Activated CD8-positive, alpha-beta T cell treated with anti-CD3 and anti-CD28 coated beads, Interleukin-2, amount 10 ng/mL, durations not matched to agents 7 days and 5 days (primary cell): ENCODE measurements at regions of chr17 and their contacts with region 1.

Region 1: GRCh38 chr17:4143563-4144421 is 795 bp downstream of the CYB5D2 start:
- DNase-seq: peak; percentile 93
- ATAC-seq: peak; percentile 77
- H3K4me3 Mint-ChIP-seq: peak overlapping the region; percentile 96
- H3K27ac Mint-ChIP-seq: peak overlapping the region; percentile 100
- H3K4me1 Mint-ChIP-seq: peaks cover 42% of the 10 kb centered on the region
- H3K27me3 Mint-ChIP-seq: no peaks in the 10 kb centered on the region

Region 2: GRCh38 chr17:4087906-4088693 is 55.7 kb before region 1 on chr17:
- CTCF ChIA-PET with region 1: no interaction called
- POLR2A ChIA-PET with region 1: no interaction called
- DNase-seq: no peak
- ATAC-seq: no peak
- H3K4me3 Mint-ChIP-seq: no peak overlapping the region
- H3K27ac Mint-ChIP-seq: no peak overlapping the region
- H3K4me1 Mint-ChIP-seq: no peaks in the 10 kb centered on the region
- H3K27me3 Mint-ChIP-seq: no peaks in the 10 kb centered on the region

Region 3: GRCh38 chr17:4156750-4157381 is 13.1 kb after region 1 on chr17:
- CTCF ChIA-PET with region 1: interaction called, 4 read pairs
- POLR2A ChIA-PET with region 1: interaction called, 47 read pairs
- DNase-seq: no peak
- ATAC-seq: no peak
- H3K4me3 Mint-ChIP-seq: no peak overlapping the region
- H3K27ac Mint-ChIP-seq: no peak overlapping the region
- H3K4me1 Mint-ChIP-seq: peaks cover 6% of the 10 kb centered on the region
- H3K27me3 Mint-ChIP-seq: no peaks in the 10 kb centered on the region

Region 4: DNA sequence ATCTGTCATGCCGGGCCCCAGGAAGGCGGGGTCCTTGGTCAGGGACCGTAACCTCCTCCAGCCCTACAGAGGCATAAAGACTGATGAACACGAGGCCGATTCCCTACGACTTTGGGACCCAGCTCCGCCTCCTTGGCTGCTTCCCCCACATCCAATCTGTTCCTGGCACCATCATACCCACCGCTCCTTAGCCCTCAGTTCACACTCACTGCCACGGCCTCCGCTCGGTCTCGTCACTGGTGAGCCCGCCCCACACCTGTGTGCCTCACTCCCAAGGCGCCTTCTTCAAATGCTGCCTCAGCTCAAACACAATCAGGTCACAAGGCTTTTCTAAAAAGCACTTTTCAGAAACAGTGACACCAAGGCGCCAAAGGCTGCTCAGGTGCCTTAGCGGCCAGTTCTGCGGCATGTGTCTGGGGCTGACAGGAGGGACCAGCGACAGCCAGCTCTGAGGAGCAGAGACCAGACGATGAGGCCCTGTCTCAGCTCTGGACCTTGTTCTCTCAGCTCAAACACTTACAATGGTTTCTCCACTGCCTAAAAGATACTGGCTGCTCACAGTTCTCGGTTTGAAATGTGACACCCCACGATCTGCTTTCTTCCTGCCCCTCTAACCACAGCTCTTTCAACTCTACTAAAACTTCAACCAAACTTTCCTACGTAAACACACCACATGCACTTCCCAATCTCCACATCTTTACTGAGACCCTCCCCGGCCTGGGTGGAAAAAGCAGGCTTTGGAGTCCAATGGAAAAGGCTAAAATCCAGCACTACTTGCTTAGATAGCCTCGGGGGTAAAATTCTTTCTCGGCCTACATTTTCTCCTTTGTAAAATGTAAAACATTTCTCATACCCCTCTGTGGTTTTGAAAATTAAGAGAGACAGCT is 32.4 kb after region 1 on chr17:
- CTCF ChIA-PET with region 1: interaction called, 7 read pairs
- POLR2A ChIA-PET with region 1: interaction called, 12 read pairs
- DNase-seq: peak; percentile 61
- ATAC-seq: peak; percentile 92
- H3K4me3 Mint-ChIP-seq: peak overlapping the region; percentile 63
- H3K27ac Mint-ChIP-seq: peak overlapping the region; percentile 99
- H3K4me1 Mint-ChIP-seq: peaks cover 46% of the 10 kb centered on the region
- H3K27me3 Mint-ChIP-seq: no peaks in the 10 kb centered on the region

Region 5: GRCh38 chr17:4263282-4264215 is 119.8 kb after region 1 on chr17 and contains the start of gene ANKFY1:
- CTCF ChIA-PET with region 1: no interaction called
- POLR2A ChIA-PET with region 1: interaction called, 13 read pairs
- DNase-seq: peak; percentile 98
- ATAC-seq: peak; percentile 97
- H3K4me3 Mint-ChIP-seq: peak within 1 kb of the TSS; percentile 91
- H3K27ac Mint-ChIP-seq: peak within 1 kb of the TSS; percentile 89
- H3K4me1 Mint-ChIP-seq: peaks cover 38% of the 10 kb centered on the region
- H3K27me3 Mint-ChIP-seq: no peaks in the 10 kb centered on the region
- total RNA-seq, gene ANKFY1: 78.9 to 81.9 TPM

Region 6: GRCh38 chr17:4366327-4367063 is 222.7 kb after region 1 on chr17 and contains the start of gene UBE2G1:
- CTCF ChIA-PET with region 1: no interaction called
- POLR2A ChIA-PET with region 1: interaction called, 11 read pairs
- DNase-seq: peak; percentile 99
- ATAC-seq: peak; percentile 91
- H3K4me3 Mint-ChIP-seq: peak within 1 kb of the TSS; percentile 76
- H3K27ac Mint-ChIP-seq: peak within 1 kb of the TSS; percentile 96
- H3K4me1 Mint-ChIP-seq: peaks cover 38% of the 10 kb centered on the region
- H3K27me3 Mint-ChIP-seq: no peaks in the 10 kb centered on the region
- total RNA-seq, gene UBE2G1: 69.1 TPM